Caco-2 (cell line): ENCODE measurements at regions of chr4 and their contacts with region 1.

Region 1: DNA sequence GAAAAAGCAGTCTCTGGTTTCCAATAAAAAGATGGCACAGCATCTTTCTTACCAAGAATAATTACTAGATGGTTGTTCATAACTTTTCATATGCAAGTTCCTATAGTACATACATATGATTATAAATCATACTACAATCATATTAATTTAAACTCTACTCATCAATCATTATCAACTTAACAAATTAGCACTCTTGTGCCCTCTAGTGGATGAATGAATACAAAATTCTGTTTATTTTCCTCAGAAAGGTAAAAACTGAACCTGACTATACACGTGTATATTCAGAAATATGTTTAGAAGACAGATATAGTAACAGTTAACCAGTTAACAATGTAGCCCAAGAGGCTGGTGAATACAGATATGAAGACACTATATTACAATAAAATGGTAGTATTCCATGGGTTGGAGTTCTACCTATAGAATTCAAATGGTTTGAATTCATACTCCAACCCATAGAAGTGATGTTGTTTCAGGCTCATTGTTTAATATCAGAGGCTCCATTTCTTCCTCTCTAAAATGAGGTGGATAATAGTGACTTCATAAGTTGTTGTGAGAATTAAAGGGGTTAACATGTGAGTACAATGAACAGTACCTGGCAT is 100.0 kb downstream of the ADAMTS3 start:
- DNase-seq: no peak
- H3K4me3 ChIP-seq: no peak overlapping the region
- H3K4me3 Mint-ChIP-seq: no peak overlapping the region
- H3K27ac Mint-ChIP-seq: no peak overlapping the region
- H3K4me1 ChIP-seq: no peaks in the 10 kb centered on the region
- H3K4me1 Mint-ChIP-seq: no peaks in the 10 kb centered on the region
- H3K27me3 ChIP-seq: no peaks in the 10 kb centered on the region
- H3K27me3 Mint-ChIP-seq: no peaks in the 10 kb centered on the region
- CTCF ChIP-seq: peak; percentile 25 to 55

Region 2: GRCh38 chr4:72295966-72296557 is 172.9 kb before region 1 on chr4:
- CTCF ChIA-PET with region 1: interaction called, 4 read pairs
- POLR2A ChIA-PET with region 1: no interaction called
- intact Hi-C with region 1: loop called (anchors 1 kb)
- DNase-seq: peak in 1 of 2 experiments; percentile 20
- H3K4me3 ChIP-seq: no peak overlapping the region
- H3K4me3 Mint-ChIP-seq: no peak overlapping the region
- H3K27ac Mint-ChIP-seq: no peak overlapping the region
- H3K4me1 ChIP-seq: no peaks in the 10 kb centered on the region
- H3K4me1 Mint-ChIP-seq: peaks cover 5% of the 10 kb centered on the region
- H3K27me3 ChIP-seq: no peaks in the 10 kb centered on the region
- H3K27me3 Mint-ChIP-seq: peaks cover 3% of the 10 kb centered on the region
- CTCF ChIP-seq: peak; percentile 45 to 54

Region 3: GRCh38 chr4:72326692-72327632 is 142.0 kb before region 1 on chr4:
- CTCF ChIA-PET with region 1: interaction called, 4 read pairs
- POLR2A ChIA-PET with region 1: no interaction called
- intact Hi-C with region 1: loop called (anchors 1 kb)
- DNase-seq: peak in 1 of 2 experiments; percentile 21
- H3K4me3 ChIP-seq: no peak overlapping the region
- H3K4me3 Mint-ChIP-seq: no peak overlapping the region
- H3K27ac Mint-ChIP-seq: no peak overlapping the region
- H3K4me1 ChIP-seq: no peaks in the 10 kb centered on the region
- H3K4me1 Mint-ChIP-seq: no peaks in the 10 kb centered on the region
- H3K27me3 ChIP-seq: no peaks in the 10 kb centered on the region; the same call in 1 of the 2 replicates
- H3K27me3 Mint-ChIP-seq: no peaks in the 10 kb centered on the region
- CTCF ChIP-seq: peak; percentile 54 to 56

Region 4: GRCh38 chr4:72496112-72496511 is 27.1 kb after region 1 on chr4:
- CTCF ChIA-PET with region 1: no interaction called
- POLR2A ChIA-PET with region 1: no interaction called
- intact Hi-C with region 1: no loop called
- DNase-seq: no peak
- H3K4me3 ChIP-seq: no peak overlapping the region
- H3K4me3 Mint-ChIP-seq: no peak overlapping the region
- H3K27ac Mint-ChIP-seq: no peak overlapping the region
- H3K4me1 ChIP-seq: no peaks in the 10 kb centered on the region
- H3K4me1 Mint-ChIP-seq: no peaks in the 10 kb centered on the region
- H3K27me3 ChIP-seq: no peaks in the 10 kb centered on the region
- H3K27me3 Mint-ChIP-seq: peaks cover 6% of the 10 kb centered on the region
- CTCF ChIP-seq: no peak